ENCODE measurements at regions of chrX and their contacts with region 1.

Region 1: GRCh38 chrX:103686199-103687072 is at the start of gene MORF4L2:
- DNase-seq: peak; percentile 69 to 96 (median 84)
- ATAC-seq: peak; percentile 81
- H3K4me3 ChIP-seq: peak within 1 kb of the TSS; percentile 88 to 90
- H3K4me3 Mint-ChIP-seq: peak within 1 kb of the TSS; percentile 80
- H3K27ac ChIP-seq: peak within 1 kb of the TSS; percentile 99 to 100
- H3K27ac Mint-ChIP-seq: peak within 1 kb of the TSS; percentile 76
- H3K4me1 ChIP-seq: peaks cover 18% of the 10 kb centered on the region
- H3K4me1 Mint-ChIP-seq: peaks cover 19% of the 10 kb centered on the region
- H3K27me3 ChIP-seq: no peaks in the 10 kb centered on the region
- H3K27me3 Mint-ChIP-seq: no peaks in the 10 kb centered on the region
- CTCF ChIP-seq: no peak
- total RNA-seq, gene MORF4L2: 203 to 204 TPM

Region 2: GRCh38 chrX:103254921-103255493 is 431.4 kb before region 1 on chrX and contains the start of gene TCEAL8:
- CTCF ChIA-PET with region 1: no interaction called
- POLR2A ChIA-PET with region 1: no interaction called
- intact Hi-C with region 1: loop called in 1 of 2 experiments (anchors 5 kb)
- DNase-seq: peak; percentile 17 to 86 (median 64)
- ATAC-seq: peak; percentile 93
- H3K4me3 ChIP-seq: peak within 1 kb of the TSS; percentile 63 to 73
- H3K4me3 Mint-ChIP-seq: peak within 1 kb of the TSS; percentile 95
- H3K27ac ChIP-seq: peak within 1 kb of the TSS; percentile 81 to 86
- H3K27ac Mint-ChIP-seq: peak within 1 kb of the TSS; percentile 92
- H3K4me1 ChIP-seq: no peaks in the 10 kb centered on the region
- H3K4me1 Mint-ChIP-seq: peaks cover 34% of the 10 kb centered on the region
- H3K27me3 ChIP-seq: no peaks in the 10 kb centered on the region
- H3K27me3 Mint-ChIP-seq: no peaks in the 10 kb centered on the region
- CTCF ChIP-seq: no peak
- total RNA-seq, gene TCEAL8: 11.3 to 11.8 TPM

Region 3: GRCh38 chrX:103533511-103534216 is 152.8 kb before region 1 on chrX:
- CTCF ChIA-PET with region 1: interaction called, 3 read pairs
- POLR2A ChIA-PET with region 1: no interaction called
- intact Hi-C with region 1: loop called (anchors 1 to 5 kb)
- DNase-seq: peak; percentile 38 to 78 (median 65)
- ATAC-seq: peak; percentile 69
- H3K4me3 ChIP-seq: peak overlapping the region in 1 of 2 experiments; percentile 4
- H3K4me3 Mint-ChIP-seq: peak overlapping the region; percentile 75
- H3K27ac ChIP-seq: no peak overlapping the region
- H3K27ac Mint-ChIP-seq: no peak overlapping the region
- H3K4me1 ChIP-seq: no peaks in the 10 kb centered on the region
- H3K4me1 Mint-ChIP-seq: peaks cover 3% of the 10 kb centered on the region
- H3K27me3 ChIP-seq: no peaks in the 10 kb centered on the region
- H3K27me3 Mint-ChIP-seq: peaks cover 2% of the 10 kb centered on the region
- CTCF ChIP-seq: peak; percentile 68

Region 4: GRCh38 chrX:103565752-103566151 is 120.7 kb before region 1 on chrX:
- CTCF ChIA-PET with region 1: no interaction called
- POLR2A ChIA-PET with region 1: no interaction called
- intact Hi-C with region 1: no loop called
- DNase-seq: no peak
- ATAC-seq: no peak
- H3K4me3 ChIP-seq: no peak overlapping the region
- H3K4me3 Mint-ChIP-seq: no peak overlapping the region
- H3K27ac ChIP-seq: no peak overlapping the region
- H3K27ac Mint-ChIP-seq: no peak overlapping the region
- H3K4me1 ChIP-seq: no peaks in the 10 kb centered on the region
- H3K4me1 Mint-ChIP-seq: no peaks in the 10 kb centered on the region
- H3K27me3 ChIP-seq: no peaks in the 10 kb centered on the region
- H3K27me3 Mint-ChIP-seq: peaks cover 2% of the 10 kb centered on the region
- CTCF ChIP-seq: no peak

Region 5: DNA sequence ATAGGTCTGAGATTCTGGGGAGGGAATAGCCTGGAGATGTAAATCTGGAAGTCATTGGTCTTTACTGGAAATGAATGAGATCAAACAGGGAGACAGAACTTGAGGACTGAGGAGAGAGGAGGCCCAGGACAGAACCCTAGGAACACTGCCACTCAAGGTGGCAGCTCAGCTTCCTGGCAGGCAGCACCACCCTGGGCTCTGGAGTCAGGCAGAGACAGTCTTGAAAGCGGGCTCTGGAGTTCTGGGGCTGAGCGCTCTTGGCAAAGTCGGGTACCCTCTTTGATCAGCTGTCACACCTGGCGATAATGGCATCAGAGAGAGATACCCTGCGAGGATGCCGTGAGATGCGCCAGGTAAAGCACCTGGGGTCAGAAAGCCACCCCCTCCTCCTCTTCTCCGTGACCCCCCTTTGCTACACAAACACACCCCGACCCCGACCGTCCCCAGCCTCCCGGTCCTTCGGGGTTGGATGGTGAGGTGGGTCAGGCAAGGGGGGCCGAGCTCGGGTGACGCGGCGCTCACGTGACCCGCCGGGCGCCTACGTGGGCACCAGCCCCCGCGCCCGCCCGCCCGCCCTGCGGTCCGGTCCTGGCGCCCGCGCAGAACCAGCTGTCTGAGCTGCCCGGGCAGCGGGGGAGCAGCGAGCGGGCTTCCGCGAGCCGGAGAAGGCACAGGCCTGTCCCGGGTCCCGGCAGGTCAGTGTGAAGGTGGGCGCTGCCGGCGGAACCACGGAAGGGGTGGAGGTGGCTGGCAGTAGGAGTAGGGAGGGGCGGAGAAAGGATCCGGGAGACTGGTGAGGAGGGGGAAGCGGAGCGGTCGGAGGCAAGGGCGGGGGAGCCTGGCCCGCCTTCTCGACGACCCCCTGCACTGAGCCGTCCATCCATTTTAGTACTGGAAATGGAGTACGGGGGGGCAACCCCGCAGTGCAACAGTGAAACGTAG is 78.8 kb before region 1 on chrX and contains the start of gene TCEAL3:
- CTCF ChIA-PET with region 1: no interaction called
- POLR2A ChIA-PET with region 1: no interaction called
- intact Hi-C with region 1: loop called (anchors 1 to 5 kb)
- DNase-seq: peak in 8 of 9 experiments; percentile 8 to 73 (median 51)
- ATAC-seq: peak; percentile 72
- H3K4me3 ChIP-seq: peak within 1 kb of the TSS; percentile 53 to 78
- H3K4me3 Mint-ChIP-seq: peak within 1 kb of the TSS; percentile 89
- H3K27ac ChIP-seq: peak within 1 kb of the TSS; percentile 47 to 83
- H3K27ac Mint-ChIP-seq: peak within 1 kb of the TSS; percentile 85
- H3K4me1 ChIP-seq: no peaks in the 10 kb centered on the region
- H3K4me1 Mint-ChIP-seq: peaks cover 5% of the 10 kb centered on the region
- H3K27me3 ChIP-seq: no peaks in the 10 kb centered on the region
- H3K27me3 Mint-ChIP-seq: no peaks in the 10 kb centered on the region
- CTCF ChIP-seq: no peak
- total RNA-seq, gene TCEAL3: 7.3 to 7.6 TPM

Region 6: DNA sequence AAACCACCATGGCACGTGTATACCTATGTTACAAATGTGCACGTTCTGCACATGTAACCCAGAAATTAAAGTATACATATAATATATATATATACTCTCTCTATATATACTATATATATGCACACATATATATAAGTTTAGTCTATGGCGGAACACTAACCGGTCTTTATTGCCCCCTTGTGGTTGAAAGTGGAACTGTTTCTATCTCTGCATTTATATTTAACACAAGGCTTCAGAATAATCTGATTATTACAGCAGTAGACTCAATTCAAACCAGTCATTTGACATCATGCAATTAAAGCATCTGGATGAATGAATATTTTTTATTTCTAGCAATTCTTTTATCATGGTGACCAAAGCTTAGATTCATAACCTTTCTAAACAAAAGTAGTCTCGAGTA is 131.1 kb after region 1 on chrX:
- CTCF ChIA-PET with region 1: no interaction called
- POLR2A ChIA-PET with region 1: no interaction called
- intact Hi-C with region 1: loop called (anchors 2 kb)
- DNase-seq: peak in 3 of 9 experiments; percentile 40 to 66 (median 60)
- ATAC-seq: peak; percentile 64
- H3K4me3 ChIP-seq: no peak overlapping the region
- H3K4me3 Mint-ChIP-seq: no peak overlapping the region
- H3K27ac ChIP-seq: no peak overlapping the region
- H3K27ac Mint-ChIP-seq: no peak overlapping the region
- H3K4me1 ChIP-seq: no peaks in the 10 kb centered on the region
- H3K4me1 Mint-ChIP-seq: no peaks in the 10 kb centered on the region
- H3K27me3 ChIP-seq: no peaks in the 10 kb centered on the region
- H3K27me3 Mint-ChIP-seq: peaks cover 8% of the 10 kb centered on the region
- CTCF ChIP-seq: peak; percentile 58

Region 7: GRCh38 chrX:104113222-104113965 is 427.0 kb after region 1 on chrX:
- CTCF ChIA-PET with region 1: no interaction called
- POLR2A ChIA-PET with region 1: no interaction called
- intact Hi-C with region 1: loop called (anchors 5 kb)
- DNase-seq: peak in 8 of 9 experiments; percentile 31 to 78 (median 58)
- ATAC-seq: peak; percentile 45
- H3K4me3 ChIP-seq: peak overlapping the region; percentile 68 to 71
- H3K4me3 Mint-ChIP-seq: peak overlapping the region; percentile 89
- H3K27ac ChIP-seq: peak overlapping the region; percentile 78 to 79
- H3K27ac Mint-ChIP-seq: peak overlapping the region; percentile 95
- H3K4me1 ChIP-seq: peaks cover 40% of the 10 kb centered on the region
- H3K4me1 Mint-ChIP-seq: peaks cover 53% of the 10 kb centered on the region
- H3K27me3 ChIP-seq: no peaks in the 10 kb centered on the region
- H3K27me3 Mint-ChIP-seq: no peaks in the 10 kb centered on the region
- CTCF ChIP-seq: peak; percentile 41

Measured in CD8-positive, alpha-beta T cell (primary cell).